CD8-positive, alpha-beta memory T cell (primary cell): ENCODE measurements at regions of chr12 and their contacts with region 1.

Region 1: GRCh38 chr12:105317942-105318621 is 12.4 kb upstream of the C12orf75 start:
- DNase-seq: no peak
- H3K4me3 ChIP-seq: no peak overlapping the region
- H3K4me3 Mint-ChIP-seq: no peak overlapping the region
- H3K27ac ChIP-seq: no peak overlapping the region
- H3K27ac Mint-ChIP-seq: peak overlapping the region in 1 of 8 donors; percentile 63
- H3K4me1 ChIP-seq: peaks cover 6% of the 10 kb centered on the region
- H3K4me1 Mint-ChIP-seq: peaks cover 7 to 19% (median 16%) of the 10 kb centered on the region in 3 donors
- H3K27me3 ChIP-seq: no peaks in the 10 kb centered on the region
- H3K27me3 Mint-ChIP-seq: peaks cover 0 to 1% of the 10 kb centered on the region in 2 donors

Region 2: DNA sequence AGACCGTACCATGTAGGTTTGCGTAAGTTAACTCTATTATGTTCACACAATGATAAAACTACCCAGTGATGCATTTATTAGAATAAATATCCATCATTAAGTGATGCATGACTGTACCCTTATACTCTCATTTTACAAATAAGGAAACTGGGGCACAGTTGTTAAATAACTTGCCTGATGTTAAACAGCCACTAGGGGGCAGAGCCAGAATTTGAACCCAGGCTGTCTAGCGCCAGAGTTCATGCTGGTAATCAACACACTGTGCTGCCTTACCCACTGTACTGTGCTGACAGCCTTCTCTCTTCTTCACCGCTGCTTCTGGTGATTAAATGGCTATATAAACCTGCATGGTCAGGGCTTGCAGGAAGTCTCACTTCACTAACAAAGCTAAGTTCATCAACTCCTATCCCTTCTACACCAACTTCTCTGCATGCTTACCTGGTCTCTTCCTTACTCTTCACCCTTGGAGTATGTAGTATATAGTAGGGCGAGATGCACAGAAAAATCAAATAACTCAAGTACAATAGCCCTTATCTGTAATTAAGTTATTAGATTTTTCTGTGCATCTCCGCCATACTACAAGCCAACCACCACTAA is 38.5 kb before region 1 on chr12:
- CTCF ChIA-PET with region 1: no interaction called
- POLR2A ChIA-PET with region 1: no interaction called
- DNase-seq: peak; percentile 5 to 64 (median 15)
- H3K4me3 ChIP-seq: no peak overlapping the region
- H3K4me3 Mint-ChIP-seq: no peak overlapping the region
- H3K27ac ChIP-seq: no peak overlapping the region
- H3K27ac Mint-ChIP-seq: no peak overlapping the region
- H3K4me1 ChIP-seq: no peaks in the 10 kb centered on the region
- H3K4me1 Mint-ChIP-seq: no peaks in the 10 kb centered on the region
- H3K27me3 ChIP-seq: no peaks in the 10 kb centered on the region
- H3K27me3 Mint-ChIP-seq: peaks cover 4 to 9% of the 10 kb centered on the region in 2 donors

Region 3: GRCh38 chr12:105330283-105330930 is 12.3 kb after region 1 on chr12 and contains the start of gene C12orf75:
- CTCF ChIA-PET with region 1: interaction called, 28 read pairs
- POLR2A ChIA-PET with region 1: interaction called, 3 read pairs
- DNase-seq: peak; percentile 80 to 93 (median 87)
- H3K4me3 ChIP-seq: peak within 1 kb of the TSS; percentile 34
- H3K4me3 Mint-ChIP-seq: peak within 1 kb of the TSS; percentile 83 to 93 (median 91)
- H3K27ac ChIP-seq: peak within 1 kb of the TSS; percentile 62
- H3K27ac Mint-ChIP-seq: peak within 1 kb of the TSS; percentile 88 to 98 (median 95)
- H3K4me1 ChIP-seq: peaks cover 47% of the 10 kb centered on the region
- H3K4me1 Mint-ChIP-seq: peaks cover 74 to 89% (median 88%) of the 10 kb centered on the region in 3 donors
- H3K27me3 ChIP-seq: no peaks in the 10 kb centered on the region
- H3K27me3 Mint-ChIP-seq: no peaks in the 10 kb centered on the region
- total RNA-seq, gene C12orf75: 52.9 to 62.8 TPM

Region 4: DNA sequence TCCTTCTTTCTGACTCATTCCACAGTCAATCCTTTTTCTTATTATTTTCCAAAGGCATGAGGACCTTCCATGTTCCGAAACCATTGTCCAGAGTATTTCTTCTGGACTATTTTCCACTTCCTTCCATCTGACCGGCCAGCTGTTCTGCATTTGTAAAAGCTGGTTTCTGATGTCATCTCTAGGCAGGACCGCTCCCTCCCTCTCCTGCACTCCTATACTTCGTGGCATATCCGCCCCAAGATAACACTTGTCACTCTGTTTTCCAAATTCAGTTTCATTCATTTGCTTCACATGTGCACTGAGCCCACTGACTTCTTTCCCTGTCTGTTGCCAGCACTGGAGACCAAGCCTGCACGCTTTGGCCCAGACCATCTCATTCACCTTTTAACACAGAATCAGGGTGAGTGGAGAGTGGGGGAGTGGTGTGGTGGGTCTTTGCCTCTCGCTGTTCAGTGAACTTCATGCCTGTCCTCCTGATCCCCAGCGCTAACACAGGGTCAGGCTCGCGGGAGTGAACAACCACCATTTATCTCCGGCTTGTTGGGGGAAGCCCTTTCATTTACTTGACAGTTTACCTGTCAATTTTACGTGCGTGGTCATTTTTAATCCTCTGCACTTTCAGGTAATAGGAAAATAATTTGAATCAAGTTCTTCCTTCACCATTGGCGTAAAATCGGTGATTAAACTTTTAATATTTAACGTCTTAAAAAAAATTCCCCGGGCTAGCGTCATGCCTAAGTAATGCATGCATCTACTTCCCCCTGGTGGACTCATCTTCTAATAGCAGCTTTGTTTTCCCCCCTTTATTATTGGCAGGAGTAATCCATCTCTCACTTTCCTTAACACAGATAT is 64.9 kb after region 1 on chr12:
- CTCF ChIA-PET with region 1: interaction called, 16 read pairs
- POLR2A ChIA-PET with region 1: interaction called, 3 read pairs
- DNase-seq: peak in 3 of 5 donors; percentile 4 to 48 (median 47)
- H3K4me3 ChIP-seq: no peak overlapping the region
- H3K4me3 Mint-ChIP-seq: no peak overlapping the region
- H3K27ac ChIP-seq: no peak overlapping the region
- H3K27ac Mint-ChIP-seq: no peak overlapping the region
- H3K4me1 ChIP-seq: no peaks in the 10 kb centered on the region
- H3K4me1 Mint-ChIP-seq: no peaks in the 10 kb centered on the region
- H3K27me3 ChIP-seq: no peaks in the 10 kb centered on the region
- H3K27me3 Mint-ChIP-seq: no peaks in the 10 kb centered on the region